Activated CD4-positive, alpha-beta T cell treated with anti-CD3 and anti-CD28 coated beads, Interleukin-2, amount 10 ng/mL, durations not matched to agents 7 days and 5 days (primary cell): ENCODE measurements at regions of chr1 and their contacts with region 1.

Region 1: GRCh38 chr1:182149411-182149965 is 88.0 kb upstream of the ZNF648 start:
- DNase-seq: peak; percentile 40
- H3K4me3 Mint-ChIP-seq: no peak overlapping the region
- H3K27ac Mint-ChIP-seq: peak overlapping the region; percentile 76
- H3K4me1 Mint-ChIP-seq: peaks cover 41% of the 10 kb centered on the region
- H3K27me3 Mint-ChIP-seq: no peaks in the 10 kb centered on the region

Region 2: GRCh38 chr1:181676269-181676668 is 473.2 kb before region 1 on chr1:
- CTCF ChIA-PET with region 1: no interaction called
- POLR2A ChIA-PET with region 1: no interaction called
- DNase-seq: no peak
- H3K4me3 Mint-ChIP-seq: no peak overlapping the region
- H3K27ac Mint-ChIP-seq: no peak overlapping the region
- H3K4me1 Mint-ChIP-seq: no peaks in the 10 kb centered on the region
- H3K27me3 Mint-ChIP-seq: peaks cover 14% of the 10 kb centered on the region

Region 3: GRCh38 chr1:182397771-182398393 is 248.4 kb after region 1 on chr1:
- CTCF ChIA-PET with region 1: interaction called, 57 read pairs
- POLR2A ChIA-PET with region 1: no interaction called
- DNase-seq: no peak
- H3K4me3 Mint-ChIP-seq: no peak overlapping the region
- H3K27ac Mint-ChIP-seq: no peak overlapping the region
- H3K4me1 Mint-ChIP-seq: peaks cover 8% of the 10 kb centered on the region
- H3K27me3 Mint-ChIP-seq: peaks cover 13% of the 10 kb centered on the region